Activated CD8-positive, alpha-beta T cell treated with anti-CD3 and anti-CD28 coated beads, Interleukin-2, amount 10 ng/mL, durations not matched to agents 7 days and 5 days (primary cell): ENCODE measurements at regions of chr10 and their contacts with region 1.

Region 1: DNA sequence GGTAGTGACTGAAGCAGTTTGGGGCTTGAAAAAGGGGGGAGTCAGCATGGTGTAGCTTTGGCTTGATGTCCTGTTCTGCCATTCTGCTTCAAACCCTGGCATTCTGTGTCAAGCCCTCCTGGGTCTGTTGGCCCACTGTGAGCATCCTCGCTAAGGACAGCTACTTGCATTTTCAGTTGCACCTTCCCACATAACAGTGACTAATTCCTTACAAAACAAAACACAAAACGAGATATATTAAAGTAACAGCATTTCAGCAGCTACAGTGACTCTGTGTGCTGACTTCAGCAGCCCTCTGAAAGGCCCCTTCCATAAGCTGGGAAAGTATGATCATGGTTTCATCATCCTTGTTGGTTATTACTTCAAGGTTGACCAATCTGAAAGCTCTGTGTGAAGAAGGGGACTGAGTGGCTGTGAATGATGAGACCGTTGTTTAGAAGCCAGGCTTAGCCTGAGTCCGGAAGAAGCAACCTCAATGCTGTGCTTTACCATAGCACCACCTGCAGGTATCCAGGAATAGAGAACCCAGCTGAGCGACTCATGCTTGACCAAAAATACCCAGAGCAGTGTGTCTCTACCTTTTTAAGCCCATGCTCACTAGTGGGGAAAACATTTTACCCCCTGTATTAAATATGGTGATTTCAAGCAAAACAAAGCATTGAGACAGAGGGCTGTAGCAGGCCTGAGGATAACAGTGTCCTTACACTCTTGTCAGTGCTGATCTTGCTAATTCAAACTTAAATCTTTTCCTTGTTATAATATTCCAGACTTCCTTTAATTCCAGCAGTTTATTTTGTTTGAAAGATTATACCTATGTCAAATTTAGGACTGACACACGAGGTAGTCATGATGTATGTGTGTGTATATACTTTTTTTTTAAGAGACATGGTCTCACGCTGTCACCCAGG is 42.6 kb upstream of the CC2D2B start:
- DNase-seq: peak; percentile 72
- ATAC-seq: peak; percentile 90
- H3K4me3 Mint-ChIP-seq: no peak overlapping the region
- H3K27ac Mint-ChIP-seq: peak overlapping the region; percentile 74
- H3K4me1 Mint-ChIP-seq: peaks cover 36% of the 10 kb centered on the region
- H3K27me3 Mint-ChIP-seq: no peaks in the 10 kb centered on the region

Region 2: DNA sequence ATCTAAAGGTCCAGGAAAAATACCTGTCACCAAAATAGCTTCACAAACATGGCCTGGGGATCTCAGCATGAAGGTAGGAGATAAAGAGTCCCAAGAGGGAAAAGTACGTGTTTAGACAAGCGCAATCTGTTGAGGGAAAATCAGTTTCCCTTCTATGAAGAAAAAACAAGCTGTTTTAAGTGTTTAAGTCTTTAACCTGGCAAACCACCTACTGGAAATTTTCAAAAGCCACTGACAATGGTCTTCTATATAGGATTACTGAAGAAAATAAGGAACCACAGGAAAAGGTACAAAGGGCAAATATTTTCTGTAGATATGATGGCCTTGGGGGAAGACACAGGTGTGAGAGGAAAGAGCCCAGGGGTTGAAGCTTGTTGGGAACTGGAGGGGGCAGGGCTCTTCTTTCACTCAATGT is 229.8 kb before region 1 on chr10:
- CTCF ChIA-PET with region 1: interaction called, 11 read pairs
- POLR2A ChIA-PET with region 1: no interaction called
- DNase-seq: no peak
- ATAC-seq: no peak
- H3K4me3 Mint-ChIP-seq: no peak overlapping the region
- H3K27ac Mint-ChIP-seq: no peak overlapping the region
- H3K4me1 Mint-ChIP-seq: no peaks in the 10 kb centered on the region
- H3K27me3 Mint-ChIP-seq: no peaks in the 10 kb centered on the region

Region 3: GRCh38 chr10:95688648-95689047 is 176.5 kb before region 1 on chr10:
- CTCF ChIA-PET with region 1: interaction called, 249 read pairs
- POLR2A ChIA-PET with region 1: interaction called, 31 read pairs
- DNase-seq: no peak
- ATAC-seq: no peak
- H3K4me3 Mint-ChIP-seq: no peak overlapping the region
- H3K27ac Mint-ChIP-seq: no peak overlapping the region
- H3K4me1 Mint-ChIP-seq: peaks cover 28% of the 10 kb centered on the region
- H3K27me3 Mint-ChIP-seq: no peaks in the 10 kb centered on the region

Region 4: DNA sequence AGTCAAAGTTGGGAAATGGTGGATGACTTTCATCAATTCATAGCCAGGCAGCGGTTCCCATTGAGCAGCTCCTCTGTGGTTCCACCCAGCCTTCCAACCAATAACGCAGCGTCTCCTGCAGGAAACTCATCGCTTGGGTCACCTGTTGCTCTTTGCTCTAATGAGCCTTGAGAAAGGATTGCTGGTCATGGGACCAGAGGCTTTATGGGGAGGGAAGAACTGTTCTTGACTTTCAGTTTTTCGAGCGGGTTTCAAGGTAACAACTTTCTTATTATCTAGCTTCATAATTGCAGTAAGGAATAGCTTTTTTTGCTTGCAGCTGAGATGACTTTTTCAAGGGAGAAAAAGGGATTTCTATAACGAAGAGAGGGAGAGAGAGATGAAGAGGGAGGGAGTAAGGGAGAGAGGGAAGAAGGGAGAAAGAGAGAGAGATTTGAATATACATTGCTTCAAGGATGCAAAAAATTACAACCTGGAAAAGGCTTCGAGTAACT is 109.6 kb before region 1 on chr10:
- CTCF ChIA-PET with region 1: interaction called, 17 read pairs
- POLR2A ChIA-PET with region 1: interaction called, 3 read pairs
- DNase-seq: no peak
- ATAC-seq: no peak
- H3K4me3 Mint-ChIP-seq: peak overlapping the region; percentile 77
- H3K27ac Mint-ChIP-seq: peak overlapping the region; percentile 80
- H3K4me1 Mint-ChIP-seq: peaks cover 48% of the 10 kb centered on the region
- H3K27me3 Mint-ChIP-seq: peaks cover 14% of the 10 kb centered on the region

Region 5: GRCh38 chr10:95841661-95842498 is 23.3 kb before region 1 on chr10:
- CTCF ChIA-PET with region 1: interaction called, 185 read pairs
- POLR2A ChIA-PET with region 1: interaction called, 6 read pairs
- DNase-seq: peak; percentile 69
- ATAC-seq: peak; percentile 67
- H3K4me3 Mint-ChIP-seq: peak overlapping the region; percentile 27
- H3K27ac Mint-ChIP-seq: peak overlapping the region; percentile 76
- H3K4me1 Mint-ChIP-seq: peaks cover 53% of the 10 kb centered on the region
- H3K27me3 Mint-ChIP-seq: peaks cover 2% of the 10 kb centered on the region

Region 6: DNA sequence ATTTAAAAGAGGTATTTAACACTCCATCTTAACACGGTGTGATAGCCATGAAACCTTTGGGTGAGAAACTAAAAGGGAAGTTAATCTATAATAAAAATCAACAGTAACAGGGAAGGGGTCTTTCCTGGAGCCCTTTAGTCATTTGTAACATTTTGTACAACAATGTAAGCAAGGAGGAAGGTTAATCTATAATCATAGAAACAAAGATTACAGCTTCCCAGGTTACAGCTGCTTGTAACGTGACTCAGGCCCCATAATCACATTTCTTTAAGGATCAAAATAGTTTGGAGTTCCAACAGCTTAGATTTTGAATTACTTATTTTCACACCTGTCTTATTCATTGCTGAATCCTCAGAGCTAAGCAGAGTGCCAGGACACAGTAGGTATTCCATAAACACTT is 24.7 kb after region 1 on chr10:
- CTCF ChIA-PET with region 1: interaction called, 10 read pairs
- POLR2A ChIA-PET with region 1: no interaction called
- DNase-seq: no peak
- ATAC-seq: no peak
- H3K4me3 Mint-ChIP-seq: no peak overlapping the region
- H3K27ac Mint-ChIP-seq: no peak overlapping the region
- H3K4me1 Mint-ChIP-seq: no peaks in the 10 kb centered on the region
- H3K27me3 Mint-ChIP-seq: no peaks in the 10 kb centered on the region

Region 7: DNA sequence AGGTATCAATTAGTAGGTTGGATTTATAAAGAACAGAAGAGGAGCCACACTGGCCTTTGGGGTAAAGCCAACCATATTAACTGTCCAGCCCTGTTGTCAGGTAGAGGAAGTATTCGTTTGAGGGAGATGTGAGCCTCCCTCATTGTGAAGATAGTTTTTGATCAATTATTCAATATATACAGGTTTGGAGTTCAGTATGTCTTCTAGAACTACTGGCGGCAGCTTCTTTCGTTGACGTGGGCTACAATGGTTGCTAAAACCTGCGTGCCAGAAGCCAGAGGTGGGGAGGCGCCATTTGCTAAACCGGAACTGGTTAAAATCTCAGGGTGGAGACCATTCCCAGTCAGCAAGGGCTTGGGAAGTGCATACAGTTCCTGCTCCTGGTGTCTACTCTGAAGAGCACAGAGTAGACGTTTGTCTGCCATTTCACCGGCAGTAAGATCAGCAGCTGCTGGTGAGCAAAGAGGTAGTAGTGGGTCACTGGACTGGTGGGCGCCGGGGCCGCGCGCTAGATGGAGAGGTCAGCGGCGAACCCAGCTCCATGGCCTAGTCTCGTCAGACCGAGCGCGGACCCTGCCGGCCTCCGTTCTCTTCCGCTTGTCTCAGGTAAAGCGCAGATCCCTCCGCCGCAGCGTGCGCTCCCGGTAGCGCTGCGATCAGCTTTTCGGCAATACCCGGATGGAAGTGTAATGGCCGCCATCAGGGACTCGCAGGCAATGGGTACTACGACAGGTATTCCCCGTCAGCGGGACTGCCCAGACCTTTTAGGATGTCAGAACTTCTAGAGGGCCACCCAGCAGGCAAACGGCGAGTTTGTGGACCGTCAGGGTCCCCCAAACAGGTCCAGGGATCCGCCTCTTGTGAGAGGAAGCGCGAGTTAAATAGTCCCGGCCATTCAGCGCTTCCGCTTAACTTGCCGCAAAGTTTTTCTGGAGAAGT is 264.5 kb after region 1 on chr10 and contains the start of gene ZNF518A:
- CTCF ChIA-PET with region 1: no interaction called
- POLR2A ChIA-PET with region 1: no interaction called
- DNase-seq: peak; percentile 92
- ATAC-seq: peak; percentile 86
- H3K4me3 Mint-ChIP-seq: peak within 1 kb of the TSS; percentile 90
- H3K27ac Mint-ChIP-seq: peak within 1 kb of the TSS; percentile 100
- H3K4me1 Mint-ChIP-seq: peaks cover 24% of the 10 kb centered on the region
- H3K27me3 Mint-ChIP-seq: peaks cover 20% of the 10 kb centered on the region
- total RNA-seq, gene ZNF518A: 15.3 to 16.5 TPM